Endothelial cell of umbilical vein (primary cell): ENCODE measurements at regions of chr6 and their contacts with region 1.

Region 1: DNA sequence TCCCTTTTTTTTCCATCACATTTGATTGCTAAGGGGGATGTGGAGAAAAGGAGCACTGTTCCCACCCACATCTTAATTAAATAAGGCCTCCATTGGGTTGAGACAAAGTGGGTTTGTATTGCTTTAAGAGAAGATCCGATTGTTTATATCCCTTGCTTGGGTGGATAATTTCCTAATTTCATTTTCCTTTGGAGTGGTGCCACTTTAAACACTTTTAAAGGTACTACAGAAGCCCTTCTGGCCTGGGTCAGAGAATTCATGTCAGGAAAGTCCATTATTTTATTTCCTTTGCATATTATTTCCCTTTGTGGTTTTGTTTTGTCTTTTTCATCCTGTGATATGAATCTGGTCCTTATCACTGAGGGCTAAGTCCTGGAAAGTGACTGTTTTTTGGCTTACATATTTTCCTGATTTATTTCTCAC is 56.9 kb downstream of the PHACTR2 start:
- DNase-seq: peak; percentile 82
- H3K4me3 ChIP-seq: no peak overlapping the region
- H3K27ac ChIP-seq: no peak overlapping the region
- H3K4me1 ChIP-seq: peaks cover 24% of the 10 kb centered on the region
- H3K27me3 ChIP-seq: no peaks in the 10 kb centered on the region
- CTCF ChIP-seq: no peak
- POLR2A ChIP-seq: peak; percentile 57

Region 2: GRCh38 chr6:143585241-143585640 is 149.4 kb before region 1 on chr6:
- CTCF ChIA-PET with region 1: no interaction called
- POLR2A ChIA-PET with region 1: no interaction called
- dilution Hi-C with region 1: no loop called
- intact Hi-C with region 1: no loop called
- DNase-seq: no peak
- H3K4me3 ChIP-seq: no peak overlapping the region
- H3K27ac ChIP-seq: no peak overlapping the region
- H3K4me1 ChIP-seq: no peaks in the 10 kb centered on the region
- H3K27me3 ChIP-seq: no peaks in the 10 kb centered on the region
- CTCF ChIP-seq: no peak
- POLR2A ChIP-seq: no peak

Region 3: GRCh38 chr6:143695130-143695968 is 39.3 kb before region 1 on chr6:
- CTCF ChIA-PET with region 1: interaction called, 3 read pairs
- POLR2A ChIA-PET with region 1: no interaction called
- dilution Hi-C with region 1: no loop called
- intact Hi-C with region 1: loop called (anchors 1 kb)
- DNase-seq: peak; percentile 49
- H3K4me3 ChIP-seq: no peak overlapping the region
- H3K27ac ChIP-seq: peak overlapping the region; percentile 0
- H3K4me1 ChIP-seq: peaks cover 53% of the 10 kb centered on the region
- H3K27me3 ChIP-seq: no peaks in the 10 kb centered on the region
- CTCF ChIP-seq: no peak
- POLR2A ChIP-seq: no peak

Region 4: DNA sequence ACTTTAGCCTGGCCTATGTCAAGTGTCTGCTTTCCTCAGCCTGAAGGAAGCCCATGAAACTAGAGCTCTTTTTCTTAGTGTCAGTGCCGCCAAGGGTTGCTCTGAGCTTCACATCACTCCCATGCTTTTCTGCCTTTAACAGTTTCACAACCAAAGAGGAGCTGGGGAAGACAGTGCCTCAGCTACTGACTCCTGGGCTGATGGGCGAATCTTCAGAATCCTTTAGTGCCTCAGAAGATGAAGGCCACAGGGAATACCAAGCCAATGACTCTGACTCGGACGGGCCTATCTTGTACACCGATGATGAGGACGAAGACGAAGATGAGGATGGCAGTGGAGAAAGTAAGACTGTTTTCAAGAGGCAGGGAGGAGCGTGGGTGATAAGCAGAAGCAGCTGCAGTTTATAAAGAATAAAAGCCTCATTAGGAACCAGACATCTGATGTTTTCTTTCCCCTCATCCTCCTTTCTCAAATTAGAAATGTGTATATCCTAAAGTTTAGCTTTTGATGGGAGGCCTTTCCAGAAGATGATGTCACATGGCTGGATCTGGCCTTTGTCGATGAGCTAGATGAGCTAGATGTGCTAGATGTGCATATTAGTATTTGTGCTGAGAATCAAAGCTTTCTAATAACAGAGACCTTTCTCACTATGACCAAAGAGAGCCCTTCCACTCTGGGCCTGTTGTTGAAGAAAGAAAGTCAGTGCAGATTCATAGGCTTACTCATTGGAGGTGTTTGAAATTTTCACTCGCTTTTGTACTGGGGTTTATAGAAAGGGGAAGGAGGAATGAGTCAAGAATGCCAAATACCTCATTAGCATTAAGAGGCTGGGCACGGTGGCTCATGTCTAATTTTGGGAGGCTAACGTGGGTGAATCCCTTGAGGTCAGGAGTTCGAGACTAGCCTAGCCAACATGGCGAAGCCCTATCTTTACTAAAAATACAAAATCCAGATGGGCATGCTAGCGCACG is 37.7 kb after region 1 on chr6:
- CTCF ChIA-PET with region 1: no interaction called
- POLR2A ChIA-PET with region 1: no interaction called
- dilution Hi-C with region 1: no loop called
- intact Hi-C with region 1: no loop called
- DNase-seq: no peak
- H3K4me3 ChIP-seq: no peak overlapping the region
- H3K27ac ChIP-seq: no peak overlapping the region
- H3K4me1 ChIP-seq: no peaks in the 10 kb centered on the region
- H3K27me3 ChIP-seq: no peaks in the 10 kb centered on the region
- CTCF ChIP-seq: no peak
- POLR2A ChIP-seq: no peak